ENCODE measurements at regions of chr4 and their contacts with region 1.

Region 1: GRCh38 chr4:98995183-98996055 is at the start of gene METAP1:
- DNase-seq: peak; percentile 97
- ATAC-seq: peak; percentile 85
- H3K4me3 ChIP-seq: peak within 1 kb of the TSS; percentile 68 to 90 (median 83)
- H3K4me3 Mint-ChIP-seq: peak within 1 kb of the TSS; percentile 92
- H3K27ac ChIP-seq: peak within 1 kb of the TSS; percentile 86 to 89
- H3K27ac Mint-ChIP-seq: peak within 1 kb of the TSS; percentile 98
- H3K4me1 ChIP-seq: peaks cover 11 to 15% of the 10 kb centered on the region in 2 donors
- H3K4me1 Mint-ChIP-seq: peaks cover 29% of the 10 kb centered on the region
- H3K27me3 ChIP-seq: no peaks in the 10 kb centered on the region
- H3K27me3 Mint-ChIP-seq: peaks cover 4% of the 10 kb centered on the region
- CTCF ChIP-seq: peak; percentile 75
- total RNA-seq, gene METAP1: 40.0 and 42.6 TPM in 2 replicates

Region 2: GRCh38 chr4:98203332-98204235 is 791.8 kb before region 1 on chr4:
- CTCF ChIA-PET with region 1: interaction called, 4 read pairs
- POLR2A ChIA-PET with region 1: no interaction called
- intact Hi-C with region 1: loop called (anchors 5 kb)
- DNase-seq: peak; percentile 75
- ATAC-seq: peak; percentile 89
- H3K4me3 ChIP-seq: peak overlapping the region; percentile 32 to 64 (median 53)
- H3K4me3 Mint-ChIP-seq: peak overlapping the region; percentile 89
- H3K27ac ChIP-seq: peak overlapping the region; percentile 74 to 86
- H3K27ac Mint-ChIP-seq: peak overlapping the region; percentile 97
- H3K4me1 ChIP-seq: peaks cover 27% of the 10 kb centered on the region in 2 donors
- H3K4me1 Mint-ChIP-seq: peaks cover 35% of the 10 kb centered on the region
- H3K27me3 ChIP-seq: no peaks in the 10 kb centered on the region
- H3K27me3 Mint-ChIP-seq: no peaks in the 10 kb centered on the region
- CTCF ChIP-seq: no peak

Region 3: DNA sequence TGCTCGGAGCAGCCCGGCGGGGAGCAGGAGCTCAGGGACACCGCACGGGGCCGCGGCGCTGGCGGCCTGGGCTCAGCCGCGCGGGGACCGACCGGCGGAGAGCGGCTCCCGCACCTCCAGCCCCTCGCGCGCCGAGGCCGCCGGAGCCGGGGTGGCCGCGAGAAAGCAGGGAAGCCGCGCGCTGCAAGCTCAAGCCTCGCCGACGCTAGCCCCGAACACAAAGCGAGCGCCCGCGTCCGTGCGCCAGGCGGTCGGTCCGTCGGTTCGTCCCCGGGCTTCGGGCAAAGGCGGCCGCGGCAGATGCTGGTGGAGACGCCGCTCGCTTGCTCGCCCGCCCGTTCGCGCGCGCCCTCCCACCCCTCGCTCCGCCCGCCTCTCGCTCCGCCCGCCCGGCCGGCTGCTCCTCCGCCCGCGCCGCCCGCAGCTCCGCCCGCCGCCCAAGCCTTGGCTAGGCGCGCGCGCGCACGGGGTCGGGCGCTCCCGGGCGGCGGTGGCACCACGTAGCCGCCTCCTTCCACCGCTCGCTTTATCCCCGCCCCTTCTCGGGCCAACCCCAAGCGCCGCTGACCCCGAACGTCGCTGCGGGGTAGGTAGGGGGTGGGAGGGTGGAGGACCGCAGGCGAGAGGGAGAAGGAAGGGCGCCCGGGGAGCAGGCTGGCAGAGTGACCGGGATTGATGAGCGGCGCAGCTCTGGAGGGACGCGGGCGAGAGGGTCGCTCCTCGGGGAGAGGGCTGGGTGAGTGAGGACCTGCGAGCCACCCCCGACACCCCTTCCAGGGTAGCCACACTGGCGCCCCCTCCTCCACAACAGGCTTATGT is 336.9 kb before region 1 on chr4 and contains the start of gene TSPAN5:
- CTCF ChIA-PET with region 1: interaction called, 6 read pairs
- POLR2A ChIA-PET with region 1: no interaction called
- intact Hi-C with region 1: loop called (anchors 1 kb)
- DNase-seq: peak; percentile 89
- ATAC-seq: peak; percentile 84
- H3K4me3 ChIP-seq: peak within 1 kb of the TSS; percentile 34 to 92 (median 81)
- H3K4me3 Mint-ChIP-seq: peak within 1 kb of the TSS; percentile 89
- H3K27ac ChIP-seq: peak within 1 kb of the TSS; percentile 37 to 74
- H3K27ac Mint-ChIP-seq: peak within 1 kb of the TSS; percentile 75
- H3K4me1 ChIP-seq: peaks cover 27 to 33% of the 10 kb centered on the region in 2 donors
- H3K4me1 Mint-ChIP-seq: peaks cover 52% of the 10 kb centered on the region
- H3K27me3 ChIP-seq: peaks cover 0 to 10% (median 1%) of the 10 kb centered on the region in 4 experiments
- H3K27me3 Mint-ChIP-seq: peaks cover 8% of the 10 kb centered on the region
- CTCF ChIP-seq: no peak
- total RNA-seq, gene TSPAN5: 5.3 TPM in 2 replicates

Region 4: DNA sequence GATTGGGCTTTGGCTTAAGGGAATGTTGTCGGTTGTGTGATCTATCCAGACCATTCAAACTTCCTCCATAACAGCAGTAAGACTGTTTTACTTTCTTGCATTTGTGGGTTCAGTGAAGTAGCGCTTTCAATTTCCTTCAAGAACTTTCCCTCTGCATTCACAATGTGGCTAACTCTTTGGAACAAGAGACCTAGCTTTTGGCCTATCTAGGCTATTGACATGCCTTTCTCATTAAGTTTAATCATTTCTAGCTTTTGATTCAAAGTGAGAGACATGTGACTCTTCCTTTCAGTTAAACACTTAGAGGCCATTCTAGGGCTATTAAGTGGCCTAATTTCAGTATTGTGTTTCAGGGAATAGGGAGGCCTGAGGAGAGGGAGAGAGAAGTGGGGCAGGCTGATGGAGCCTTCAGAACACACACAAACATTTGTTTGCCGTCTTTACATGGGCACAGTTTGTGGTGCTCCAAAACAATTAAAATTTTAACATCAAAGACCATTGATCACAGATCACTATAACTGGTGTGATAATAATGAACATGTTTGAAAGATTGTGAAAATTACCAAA is 59.1 kb after region 1 on chr4:
- CTCF ChIA-PET with region 1: interaction called, 173 read pairs
- POLR2A ChIA-PET with region 1: interaction called, 3 read pairs
- intact Hi-C with region 1: loop called (anchors 1 kb)
- DNase-seq: no peak
- ATAC-seq: no peak
- H3K4me3 ChIP-seq: no peak overlapping the region
- H3K4me3 Mint-ChIP-seq: no peak overlapping the region
- H3K27ac ChIP-seq: no peak overlapping the region
- H3K27ac Mint-ChIP-seq: peak overlapping the region; percentile 46
- H3K4me1 ChIP-seq: no peaks in the 10 kb centered on the region
- H3K4me1 Mint-ChIP-seq: peaks cover 14% of the 10 kb centered on the region
- H3K27me3 ChIP-seq: no peaks in the 10 kb centered on the region
- H3K27me3 Mint-ChIP-seq: no peaks in the 10 kb centered on the region
- CTCF ChIP-seq: no peak

Region 5: DNA sequence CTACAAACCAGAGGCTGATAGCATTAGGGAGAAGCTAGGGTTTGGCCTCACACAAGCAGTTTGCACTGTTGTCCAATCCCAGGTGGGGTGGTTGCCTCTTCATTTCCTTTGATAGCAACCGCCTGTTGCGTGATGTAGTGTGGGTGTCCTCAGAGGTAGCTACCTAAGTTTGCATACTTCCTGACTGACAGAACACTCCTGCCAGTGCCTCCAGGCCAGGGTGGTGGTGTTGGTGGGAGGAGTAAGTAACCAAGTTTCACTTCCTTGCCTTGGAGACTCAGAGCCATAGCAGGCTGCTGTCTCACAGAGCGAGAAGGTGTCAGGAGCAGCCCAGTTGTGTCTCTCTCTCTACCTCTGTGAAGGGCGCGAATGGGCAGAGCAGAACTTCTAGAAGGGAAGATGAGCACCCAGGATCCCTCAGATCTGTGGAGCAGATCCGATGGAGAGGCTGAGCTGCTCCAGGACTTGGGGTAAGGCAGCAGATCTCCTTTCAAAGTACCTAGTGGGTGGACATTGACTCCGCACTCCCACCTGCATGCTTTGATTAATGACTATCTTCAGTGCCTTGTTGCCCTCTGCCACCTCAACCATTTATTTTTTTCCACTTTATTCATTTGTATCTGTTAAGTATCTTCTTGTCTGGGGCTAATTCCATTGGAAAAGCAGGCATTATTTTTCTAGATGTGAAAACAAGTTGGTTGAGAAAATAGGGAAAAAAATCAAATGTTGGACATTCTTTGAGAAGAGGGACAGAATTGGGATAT is 821.3 kb after region 1 on chr4 and contains the start of gene DAPP1:
- CTCF ChIA-PET with region 1: interaction called, 6 read pairs
- POLR2A ChIA-PET with region 1: no interaction called
- intact Hi-C with region 1: loop called (anchors 5 kb)
- DNase-seq: peak; percentile 94
- ATAC-seq: peak; percentile 94
- H3K4me3 ChIP-seq: peak within 1 kb of the TSS; percentile 60 to 100 (median 91)
- H3K4me3 Mint-ChIP-seq: peak within 1 kb of the TSS; percentile 95
- H3K27ac ChIP-seq: peak within 1 kb of the TSS; percentile 77 to 95
- H3K27ac Mint-ChIP-seq: peak within 1 kb of the TSS; percentile 90
- H3K4me1 ChIP-seq: peaks cover 50 to 57% of the 10 kb centered on the region in 2 donors
- H3K4me1 Mint-ChIP-seq: peaks cover 58% of the 10 kb centered on the region
- H3K27me3 ChIP-seq: no peaks in the 10 kb centered on the region
- H3K27me3 Mint-ChIP-seq: no peaks in the 10 kb centered on the region
- CTCF ChIP-seq: no peak
- total RNA-seq, gene DAPP1: 166 and 169 TPM in 2 replicates

Measured in B cell (primary cell).